ENCODE measurements at regions of chr1 and their contacts with region 1.

Region 1: DNA sequence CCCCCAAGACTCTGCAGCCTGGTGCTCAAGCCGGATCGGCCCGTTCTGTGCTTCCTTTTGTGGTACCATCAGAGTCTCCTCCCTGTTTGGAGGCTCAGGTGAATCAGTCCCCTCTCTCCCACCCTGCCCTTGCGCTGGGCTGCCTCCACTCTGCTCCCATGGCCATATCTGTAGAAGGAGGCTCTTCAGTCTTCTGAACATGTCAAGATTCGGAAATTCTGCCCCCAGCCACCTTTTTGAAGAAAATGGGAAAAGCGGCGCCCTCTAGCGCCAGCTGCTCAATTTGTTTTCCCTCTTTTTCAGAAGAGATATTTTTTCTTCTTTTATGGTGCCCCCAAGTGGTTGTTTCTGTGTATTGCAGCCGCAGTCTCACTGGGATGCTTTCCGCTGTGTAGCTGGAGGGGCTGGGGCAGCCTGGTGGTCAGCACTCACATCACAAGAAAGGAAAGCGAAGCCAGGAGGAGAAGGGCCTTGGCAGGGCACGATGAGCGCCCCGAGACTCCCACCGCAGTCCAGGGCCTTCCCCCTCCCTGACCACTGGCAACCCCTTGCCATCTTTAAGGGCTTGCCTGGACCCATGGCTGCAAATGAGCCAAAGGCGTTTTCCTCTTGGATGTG is 58.4 kb upstream of the CACNA1E start:
- DNase-seq: no peak
- H3K4me3 ChIP-seq: no peak overlapping the region
- H3K27ac ChIP-seq: no peak overlapping the region
- H3K4me1 ChIP-seq: peaks cover 0 to 7% (median 0%) of the 10 kb centered on the region in 3 donors
- H3K27me3 ChIP-seq: peaks cover 0 to 43% (median 0%) of the 10 kb centered on the region in 4 donors
- CTCF ChIP-seq: peak; percentile 93 to 98 (median 97)
- POLR2A ChIP-seq: no peak

Region 2: GRCh38 chr1:181189691-181190363 is 235.1 kb before region 1 on chr1:
- intact Hi-C with region 1: loop called (anchors 2 kb)
- DNase-seq: no peak
- H3K4me3 ChIP-seq: peak overlapping the region in 2 of 4 donors; percentile 26 to 51
- H3K27ac ChIP-seq: no peak overlapping the region
- H3K4me1 ChIP-seq: peaks cover 0 to 10% (median 5%) of the 10 kb centered on the region in 3 donors
- H3K27me3 ChIP-seq: peaks cover 0 to 69% (median 0%) of the 10 kb centered on the region in 4 donors
- CTCF ChIP-seq: peak; percentile 92 to 99 (median 96)
- POLR2A ChIP-seq: no peak

Measured in esophagus squamous epithelium (tissue), 5 donors.